ENCODE measurements at regions of chr17 and their contacts with region 1.

Region 1: DNA sequence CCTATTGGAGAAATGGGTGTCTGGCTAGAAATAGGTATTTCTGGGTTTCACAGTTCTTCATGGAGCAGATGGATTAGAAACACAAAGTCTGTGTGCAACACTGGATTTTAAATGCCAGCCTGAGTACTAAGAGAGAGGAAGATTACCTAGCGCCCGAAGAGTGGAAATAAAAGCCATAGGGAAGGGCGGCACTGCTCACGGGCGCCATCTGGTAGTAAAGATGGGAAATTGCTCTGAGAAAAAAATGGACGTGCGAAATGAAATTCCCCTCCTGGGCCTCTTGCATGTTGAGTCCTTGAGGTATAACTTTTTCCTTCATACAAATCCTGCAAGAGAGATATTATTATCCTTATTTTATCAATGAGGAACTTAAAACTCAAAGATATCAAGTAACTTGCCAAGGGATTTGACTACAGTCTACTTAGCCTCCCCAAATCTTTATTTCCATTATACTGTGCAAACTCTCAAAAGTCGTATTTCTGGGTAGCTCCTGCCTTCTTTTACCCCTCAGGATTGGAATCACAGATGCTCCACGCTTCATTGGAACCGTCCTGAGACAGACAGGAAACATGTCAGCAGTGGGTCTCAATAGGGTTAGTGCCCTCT is 72.8 kb downstream of the MMD start:
- DNase-seq: peak in 2 of 4 donors; percentile 64 to 79
- ATAC-seq: peak; percentile 95
- H3K4me3 ChIP-seq: no peak overlapping the region
- H3K27ac ChIP-seq: no peak overlapping the region
- H3K4me1 ChIP-seq: no peaks in the 10 kb centered on the region
- H3K27me3 ChIP-seq: no peaks in the 10 kb centered on the region
- CTCF ChIP-seq: peak; percentile 61 to 78

Region 2: DNA sequence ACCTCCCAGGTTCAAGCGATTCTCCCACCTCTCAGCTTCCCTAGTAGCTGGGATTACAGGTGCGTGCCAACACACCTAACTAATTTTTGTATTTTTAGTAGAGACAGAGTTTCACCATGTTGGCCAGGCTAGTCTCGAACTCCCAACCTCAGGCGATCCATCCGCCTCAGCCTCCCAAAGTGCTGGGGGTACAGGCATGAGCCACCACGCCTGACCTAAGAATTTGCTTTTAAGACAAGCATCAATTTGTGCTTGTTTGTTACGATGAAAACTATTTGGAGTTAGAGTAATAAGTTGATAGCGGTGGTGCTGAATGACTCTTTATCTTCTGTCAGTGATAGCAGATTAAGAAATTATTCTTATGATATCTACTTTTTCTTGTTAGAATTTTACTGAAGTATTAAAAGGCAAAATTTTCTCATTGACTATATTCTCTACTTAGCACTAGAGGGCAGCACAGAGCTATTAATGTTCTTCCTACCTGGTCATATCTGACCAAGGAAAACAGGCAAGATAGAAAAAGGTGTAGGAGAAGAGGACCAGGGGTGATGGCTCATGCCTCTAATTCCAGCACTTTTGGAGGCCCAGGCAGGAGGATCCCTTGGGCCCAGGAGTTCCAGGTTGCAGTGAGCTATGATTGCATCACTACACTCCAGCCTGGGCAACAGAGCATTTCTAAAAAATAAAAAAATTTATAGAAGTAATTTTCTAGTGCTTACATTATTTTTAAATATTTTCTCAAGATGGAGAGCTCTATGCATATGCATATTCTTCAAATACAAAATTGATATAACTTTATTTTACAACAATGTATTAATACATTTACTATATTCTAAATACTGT is 355.8 kb before region 1 on chr17:
- intact Hi-C with region 1: loop called in 1 of 2 experiments (anchors 10 kb)
- DNase-seq: peak in 2 of 4 donors; percentile 37 to 61
- ATAC-seq: peak; percentile 90
- H3K4me3 ChIP-seq: no peak overlapping the region
- H3K27ac ChIP-seq: no peak overlapping the region
- H3K4me1 ChIP-seq: no peaks in the 10 kb centered on the region
- H3K27me3 ChIP-seq: no peaks in the 10 kb centered on the region
- CTCF ChIP-seq: peak; percentile 52 to 55

Region 3: DNA sequence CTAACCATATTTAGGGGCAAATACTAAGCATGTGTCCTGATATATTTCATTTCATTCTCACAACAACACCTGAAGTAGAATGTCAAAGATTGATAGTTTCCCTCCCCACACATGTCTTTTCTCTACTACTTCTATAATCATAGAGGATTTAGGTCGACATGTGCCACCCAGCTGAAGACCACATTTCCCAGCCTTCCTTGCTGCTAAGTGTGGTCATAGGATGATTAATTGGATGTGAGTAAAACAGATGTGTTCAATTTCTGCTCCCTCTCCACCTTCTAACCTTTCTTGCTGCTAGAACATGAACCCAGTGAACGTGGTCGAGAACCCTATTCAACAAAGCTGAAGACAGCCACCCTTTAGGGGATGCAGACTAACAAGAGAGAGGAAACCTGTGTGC is 102.9 kb before region 1 on chr17:
- intact Hi-C with region 1: no loop called
- DNase-seq: no peak
- ATAC-seq: no peak
- H3K4me3 ChIP-seq: no peak overlapping the region
- H3K27ac ChIP-seq: no peak overlapping the region
- H3K4me1 ChIP-seq: no peaks in the 10 kb centered on the region
- H3K27me3 ChIP-seq: peaks cover 0 to 6% of the 10 kb centered on the region in 2 donors
- CTCF ChIP-seq: no peak

Region 4: DNA sequence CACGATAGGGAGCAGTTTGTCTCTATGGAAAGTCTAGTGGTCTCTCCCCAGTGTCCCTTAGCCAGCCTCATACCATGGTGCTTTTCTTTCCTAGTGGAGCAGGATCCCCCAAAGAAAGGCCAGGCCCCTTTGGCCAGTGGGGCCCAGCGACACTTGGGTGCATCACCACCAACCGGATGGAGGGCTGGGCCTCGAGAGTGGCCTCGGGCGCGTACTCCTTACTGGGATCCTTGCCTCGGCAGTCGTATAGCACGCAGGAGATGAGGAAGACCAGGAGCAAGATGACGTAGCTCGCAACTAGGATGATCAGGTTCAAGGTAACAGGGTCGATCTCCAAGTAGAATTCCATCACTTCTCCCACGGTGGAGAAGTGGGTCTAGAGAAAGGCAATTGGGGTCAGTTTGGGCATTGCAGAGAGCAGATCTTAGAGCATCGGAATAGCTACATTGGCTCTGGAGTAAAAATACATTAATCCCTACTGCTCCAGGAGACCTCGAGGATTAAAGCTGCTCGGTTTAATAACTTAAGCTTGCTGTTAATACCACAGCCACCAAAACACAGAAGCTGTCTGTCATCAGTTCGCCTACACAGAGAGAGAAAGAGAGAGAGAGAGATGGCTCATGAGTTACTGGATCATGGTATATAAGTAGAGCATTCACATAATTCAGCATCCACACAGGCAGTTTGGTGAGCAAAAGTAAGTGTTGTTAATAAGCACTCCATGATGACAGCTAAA is 162.3 kb after region 1 on chr17 and contains the start of gene SMIM36:
- intact Hi-C with region 1: no loop called
- DNase-seq: peak in 1 of 4 donors; percentile 78
- ATAC-seq: no peak
- H3K4me3 ChIP-seq: no peak within 1 kb of the TSS
- H3K27ac ChIP-seq: no peak within 1 kb of the TSS
- H3K4me1 ChIP-seq: no peaks in the 10 kb centered on the region
- H3K27me3 ChIP-seq: no peaks in the 10 kb centered on the region
- CTCF ChIP-seq: no peak
- polyA plus RNA-seq, gene SMIM36: 0.11 to 0.28 (median 0.26) TPM